Left colon (tissue), 2 donors: ENCODE measurements at regions of chr6 and their contacts with region 1.

Region 1: DNA sequence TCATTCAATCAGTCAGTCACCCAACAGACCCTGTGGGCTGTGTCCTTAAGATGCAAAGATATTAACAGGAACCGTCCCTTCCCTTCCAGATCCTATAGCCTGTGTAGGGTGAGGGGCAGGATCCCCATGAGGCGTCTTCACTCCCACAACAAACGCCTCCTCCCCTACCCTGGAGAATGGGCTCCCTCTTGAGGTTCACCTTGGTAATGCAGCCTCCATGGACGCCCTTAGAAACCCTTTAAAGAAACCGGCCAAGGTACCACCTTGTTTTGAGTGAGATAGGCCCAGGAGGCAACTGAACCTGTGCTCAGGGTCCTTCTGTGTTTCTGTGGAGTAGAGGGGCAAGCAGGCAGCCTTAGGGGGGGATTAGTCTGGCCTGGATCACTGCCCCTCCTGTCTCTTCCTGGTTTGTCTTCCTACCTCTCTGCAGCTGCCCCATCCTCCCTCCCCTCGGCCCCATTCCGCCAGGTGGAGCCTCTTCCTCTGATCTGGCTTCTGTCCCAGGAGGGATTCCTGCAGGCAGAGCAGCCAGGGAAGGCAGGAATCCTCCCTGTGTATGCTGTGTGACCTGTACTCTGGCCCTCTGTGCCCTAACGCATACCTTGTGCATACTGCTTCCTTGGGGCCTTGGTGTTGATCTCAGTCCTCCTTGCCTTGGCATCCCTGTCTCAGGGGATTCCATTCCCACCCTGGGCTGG is 6.6 kb upstream of the GUCA1A start:
- DNase-seq: peak; percentile 63 to 85
- ATAC-seq: peak; percentile 96

Region 2: DNA sequence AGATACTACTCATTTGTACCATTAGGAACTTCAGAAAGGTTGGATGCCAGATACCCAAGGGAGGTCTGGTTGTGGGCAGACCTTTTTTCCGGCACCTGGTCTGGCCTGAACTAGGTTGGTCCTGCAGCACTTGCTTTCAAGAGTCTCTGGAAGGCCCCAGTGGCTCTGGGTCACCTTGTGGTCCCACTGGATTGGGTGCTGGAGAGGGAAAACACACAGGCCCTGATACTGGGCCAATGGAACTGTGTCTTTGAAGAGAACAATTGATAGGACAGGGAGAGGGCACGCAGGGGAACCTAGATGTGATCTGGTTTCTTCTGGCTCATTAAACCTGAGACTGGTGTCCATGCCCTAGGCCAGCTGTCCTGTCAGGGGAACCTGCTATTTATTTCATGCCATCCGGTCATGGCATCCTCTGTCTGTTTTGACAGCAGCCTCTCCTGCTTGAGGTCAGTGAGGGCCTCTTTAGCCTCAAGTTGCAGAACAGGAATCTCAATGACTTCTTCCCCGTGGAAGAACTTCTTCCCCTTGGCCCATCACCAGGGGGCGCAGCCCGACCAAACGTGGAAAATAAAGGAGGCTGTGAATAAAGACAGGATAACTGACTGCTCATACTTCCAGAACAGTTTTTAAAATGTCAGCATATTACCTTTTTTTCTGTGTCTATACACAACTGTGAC is 91.3 kb before region 1 on chr6:
- intact Hi-C with region 1: loop called (anchors 2 to 10 kb)
- DNase-seq: peak; percentile 53 to 89
- ATAC-seq: peak; percentile 89